ENCODE measurements at regions of chr11 and their contacts with region 1.

Region 1: DNA sequence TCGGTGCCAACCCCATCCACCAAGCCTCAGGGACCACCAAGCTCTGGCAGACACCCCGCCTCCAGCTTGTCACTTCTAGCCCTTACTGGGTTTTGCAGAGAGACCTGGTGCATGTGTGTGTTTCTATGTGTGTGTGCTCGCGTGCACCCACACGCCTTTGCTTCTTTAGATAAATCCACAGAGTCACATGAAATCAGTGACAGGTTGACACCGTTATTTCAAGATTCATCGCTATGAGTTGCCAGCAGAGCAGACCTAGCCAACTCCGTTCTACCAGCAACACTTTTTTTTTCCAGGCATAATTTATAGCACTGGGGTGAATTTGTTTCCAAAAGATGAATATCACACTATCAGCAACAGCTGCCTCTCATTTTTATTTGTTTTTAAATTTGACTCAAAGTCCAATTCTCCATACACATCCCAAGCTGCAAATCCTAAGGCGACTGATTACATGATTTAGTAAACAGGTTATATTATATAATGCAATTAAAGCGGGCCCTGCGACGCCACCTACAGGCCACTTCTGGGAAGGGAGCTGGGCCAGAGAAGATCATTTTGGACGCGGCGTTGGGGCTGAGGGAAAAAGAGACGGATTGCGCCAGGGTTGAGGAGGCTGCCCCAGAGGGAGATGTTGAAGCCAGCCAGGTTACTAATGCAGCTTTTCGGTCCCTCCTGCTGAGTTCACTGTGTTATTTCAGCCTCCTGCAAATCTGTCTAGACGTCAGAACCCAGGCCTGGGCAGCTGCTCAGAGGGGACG is 150.5 kb downstream of the FEZ1 start:
- DNase-seq: peak; percentile 84
- H3K4me3 ChIP-seq: no peak overlapping the region
- H3K27ac ChIP-seq: no peak overlapping the region
- H3K4me1 ChIP-seq: peaks cover 0 to 7% of the 10 kb centered on the region in 2 experiments; a peak in 1 of 4 replicates
- H3K27me3 ChIP-seq: no peaks in the 10 kb centered on the region
- CTCF ChIP-seq: peak; percentile 95
- EP300 ChIP-seq: peak in 1 of 2 experiments; percentile 20; a peak in 1 of 4 replicates
- RAD21 ChIP-seq: peak; percentile 69

Region 2: DNA sequence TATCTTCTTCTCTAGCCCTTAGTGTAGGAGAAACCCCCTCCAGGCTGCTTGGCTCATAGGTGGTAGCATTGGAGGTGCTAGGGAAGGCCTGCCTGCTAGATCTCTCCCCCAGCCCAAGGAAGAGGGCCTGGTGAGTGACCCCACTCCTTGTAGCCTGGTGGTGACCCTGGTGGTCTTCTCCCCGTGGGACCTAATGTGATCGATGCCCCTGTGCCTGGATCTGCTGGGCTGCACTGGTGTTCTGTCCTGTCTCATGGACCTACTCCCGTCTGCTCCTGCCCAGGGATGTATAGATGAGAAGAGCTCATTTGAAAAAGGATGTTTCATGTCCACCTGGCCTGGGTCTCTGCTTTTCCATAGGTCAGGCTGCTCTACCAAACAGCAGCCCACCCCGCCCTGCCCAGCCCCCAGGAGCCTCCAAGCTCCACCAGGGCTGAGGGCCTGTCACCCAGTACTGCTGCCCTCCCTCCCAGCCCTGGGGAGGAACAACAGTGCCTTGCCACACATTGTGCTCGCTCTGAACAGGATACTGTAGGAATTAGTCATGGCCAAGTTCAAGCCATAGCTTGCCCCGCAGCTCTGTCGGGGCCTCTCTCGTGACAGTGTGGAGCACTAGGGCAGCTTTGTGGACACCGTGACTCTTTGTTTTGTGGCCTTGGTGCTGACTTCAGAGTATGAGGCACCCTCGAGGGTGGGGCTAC is 262.8 kb before region 1 on chr11:
- CTCF ChIA-PET with region 1: interaction called, 90 read pairs
- POLR2A ChIA-PET with region 1: no interaction called
- DNase-seq: peak; percentile 13
- H3K4me3 ChIP-seq: no peak overlapping the region
- H3K27ac ChIP-seq: no peak overlapping the region
- H3K4me1 ChIP-seq: no peaks in the 10 kb centered on the region
- H3K27me3 ChIP-seq: no peaks in the 10 kb centered on the region
- CTCF ChIP-seq: no peak
- EP300 ChIP-seq: no peak
- RAD21 ChIP-seq: no peak

Region 3: GRCh38 chr11:125154378-125155099 is 191.1 kb before region 1 on chr11:
- CTCF ChIA-PET with region 1: interaction called, 10 read pairs
- POLR2A ChIA-PET with region 1: interaction called, 3 read pairs
- DNase-seq: no peak
- H3K4me3 ChIP-seq: no peak overlapping the region
- H3K27ac ChIP-seq: no peak overlapping the region
- H3K4me1 ChIP-seq: peaks cover 0 to 8% of the 10 kb centered on the region in 2 experiments; a peak in 1 of 4 replicates
- H3K27me3 ChIP-seq: peaks cover 11% of the 10 kb centered on the region; the same call in 1 of the 2 replicates
- CTCF ChIP-seq: no peak
- EP300 ChIP-seq: no peak
- RAD21 ChIP-seq: no peak

Region 4: GRCh38 chr11:125284245-125284850 is 61.3 kb before region 1 on chr11:
- CTCF ChIA-PET with region 1: interaction called, 16 read pairs
- POLR2A ChIA-PET with region 1: no interaction called
- DNase-seq: peak; percentile 57
- H3K4me3 ChIP-seq: no peak overlapping the region
- H3K27ac ChIP-seq: no peak overlapping the region
- H3K4me1 ChIP-seq: peaks cover 0 to 15% of the 10 kb centered on the region in 2 experiments; a peak in 1 of 4 replicates
- H3K27me3 ChIP-seq: peaks cover 5% of the 10 kb centered on the region
- CTCF ChIP-seq: no peak
- EP300 ChIP-seq: no peak
- RAD21 ChIP-seq: no peak

Region 5: GRCh38 chr11:125329786-125330185 is 15.8 kb before region 1 on chr11:
- CTCF ChIA-PET with region 1: interaction called, 129 read pairs
- POLR2A ChIA-PET with region 1: no interaction called
- DNase-seq: no peak
- H3K4me3 ChIP-seq: no peak overlapping the region
- H3K27ac ChIP-seq: no peak overlapping the region
- H3K4me1 ChIP-seq: no peaks in the 10 kb centered on the region
- H3K27me3 ChIP-seq: peaks cover 29% of the 10 kb centered on the region; the same call in 1 of the 2 replicates
- CTCF ChIP-seq: no peak
- EP300 ChIP-seq: no peak
- RAD21 ChIP-seq: no peak

Region 6: GRCh38 chr11:125390946-125391345 is 45.3 kb after region 1 on chr11:
- CTCF ChIA-PET with region 1: interaction called, 15 read pairs
- POLR2A ChIA-PET with region 1: no interaction called
- DNase-seq: peak; percentile 60
- H3K4me3 ChIP-seq: no peak overlapping the region
- H3K27ac ChIP-seq: no peak overlapping the region
- H3K4me1 ChIP-seq: peaks cover 0 to 6% of the 10 kb centered on the region in 2 experiments; a peak in 2 of 4 replicates
- H3K27me3 ChIP-seq: no peaks in the 10 kb centered on the region
- CTCF ChIP-seq: no peak
- EP300 ChIP-seq: no peak
- RAD21 ChIP-seq: no peak

Region 7: DNA sequence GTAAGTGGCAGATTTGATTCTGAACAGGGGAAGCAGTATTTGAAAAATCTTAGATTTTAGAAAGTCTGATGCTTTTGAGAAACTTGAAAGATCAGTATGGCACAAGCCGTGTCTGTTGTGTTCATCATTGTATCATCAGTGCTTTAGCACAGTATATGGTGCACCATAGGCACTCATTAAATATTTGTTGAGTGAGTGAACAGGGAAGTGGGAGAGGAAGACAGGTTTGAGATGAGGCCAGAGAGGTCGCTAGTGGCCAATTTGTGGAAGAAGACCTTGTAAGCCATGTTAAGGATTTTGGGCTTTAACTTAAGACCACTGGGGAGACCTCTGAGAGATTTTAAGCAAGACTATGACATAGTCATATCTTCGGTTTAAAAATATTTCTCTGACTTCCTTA is 292.2 kb after region 1 on chr11:
- CTCF ChIA-PET with region 1: no interaction called
- POLR2A ChIA-PET with region 1: no interaction called
- DNase-seq: no peak
- H3K4me3 ChIP-seq: no peak overlapping the region
- H3K27ac ChIP-seq: no peak overlapping the region
- H3K4me1 ChIP-seq: no peaks in the 10 kb centered on the region
- H3K27me3 ChIP-seq: no peaks in the 10 kb centered on the region
- CTCF ChIP-seq: no peak
- EP300 ChIP-seq: no peak
- RAD21 ChIP-seq: no peak